Activated CD4-positive, alpha-beta T cell treated with anti-CD3 and anti-CD28 coated beads for 36 hours (primary cell): ENCODE measurements at regions of chr16 and their contacts with region 1.

Region 1: DNA sequence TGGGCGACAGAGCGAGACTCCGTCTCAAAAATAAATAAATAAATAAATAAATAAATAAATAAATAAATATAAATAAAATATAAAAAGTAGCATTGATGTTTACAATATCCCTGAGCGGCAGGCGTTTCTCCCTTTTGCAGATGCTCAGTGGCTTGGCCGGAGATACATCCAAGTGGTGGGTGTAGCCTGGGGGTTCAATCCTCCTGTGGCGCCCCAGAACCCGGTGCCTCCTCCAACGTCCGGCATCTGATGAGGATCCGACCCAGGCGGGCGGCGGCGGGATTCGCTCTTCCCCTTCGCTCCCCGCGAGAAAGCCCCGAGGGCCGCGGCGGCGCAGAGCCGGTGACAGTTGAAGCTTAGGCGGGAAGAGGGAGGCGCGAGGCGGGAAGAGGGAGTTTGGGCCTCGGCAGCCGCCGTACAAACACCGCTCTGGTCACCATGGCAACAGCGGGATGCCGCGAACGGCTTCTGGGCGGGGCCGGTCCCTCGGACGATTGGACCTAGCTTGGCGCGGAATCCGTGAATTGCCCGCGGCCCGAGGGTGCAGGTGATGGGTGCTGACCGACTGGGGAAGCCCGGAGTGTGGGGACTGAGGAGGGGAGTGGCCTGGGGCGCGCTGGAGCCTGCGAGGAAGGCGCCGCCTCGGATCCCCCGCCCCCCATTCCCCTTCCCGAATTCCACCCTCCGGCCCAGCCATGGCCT is 12.7 kb upstream of the ALDOA start:
- DNase-seq: peak; percentile 95
- ATAC-seq: peak; percentile 69
- H3K4me3 Mint-ChIP-seq: peak overlapping the region; percentile 78
- H3K27ac Mint-ChIP-seq: peak overlapping the region; percentile 72
- H3K4me1 Mint-ChIP-seq: peaks cover 25% of the 10 kb centered on the region
- H3K27me3 Mint-ChIP-seq: peaks cover 2% of the 10 kb centered on the region

Region 2: GRCh38 chr16:30032083-30032819 is 20.6 kb before region 1 on chr16:
- CTCF ChIA-PET with region 1: interaction called, 22 read pairs
- POLR2A ChIA-PET with region 1: interaction called, 4 read pairs
- intact Hi-C with region 1: no loop called
- DNase-seq: peak; percentile 80
- ATAC-seq: peak; percentile 62
- H3K4me3 Mint-ChIP-seq: peak overlapping the region; percentile 8
- H3K27ac Mint-ChIP-seq: no peak overlapping the region
- H3K4me1 Mint-ChIP-seq: peaks cover 8% of the 10 kb centered on the region
- H3K27me3 Mint-ChIP-seq: peaks cover 38% of the 10 kb centered on the region

Region 3: DNA sequence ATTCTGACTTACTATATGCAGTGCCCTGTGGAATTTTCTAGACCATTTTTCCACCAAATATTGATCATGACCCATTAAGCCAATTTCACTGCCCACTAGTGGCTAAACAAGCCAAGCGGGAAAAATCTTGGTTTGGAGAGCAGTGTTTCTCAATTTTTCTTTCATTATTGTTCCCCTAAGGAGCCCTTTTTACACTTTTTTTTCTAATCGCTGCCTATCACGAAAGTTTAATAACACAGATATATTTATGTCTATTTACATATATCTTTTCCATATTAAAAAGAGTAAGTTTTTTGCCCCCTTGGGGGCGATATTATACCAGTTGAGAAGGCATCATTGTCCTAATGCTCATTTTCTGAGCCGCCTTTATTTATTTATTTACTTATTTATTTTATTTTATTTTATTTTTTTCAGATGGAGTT is 11.0 kb before region 1 on chr16:
- CTCF ChIA-PET with region 1: interaction called, 11 read pairs
- POLR2A ChIA-PET with region 1: interaction called, 4 read pairs
- intact Hi-C with region 1: no loop called
- DNase-seq: no peak
- ATAC-seq: no peak
- H3K4me3 Mint-ChIP-seq: no peak overlapping the region
- H3K27ac Mint-ChIP-seq: no peak overlapping the region
- H3K4me1 Mint-ChIP-seq: no peaks in the 10 kb centered on the region
- H3K27me3 Mint-ChIP-seq: peaks cover 2% of the 10 kb centered on the region

Region 4: GRCh38 chr16:30122604-30123160 is 69.9 kb after region 1 on chr16:
- CTCF ChIA-PET with region 1: no interaction called
- POLR2A ChIA-PET with region 1: no interaction called
- intact Hi-C with region 1: loop called in 1 of 2 experiments (anchors 1 kb)
- DNase-seq: peak; percentile 35
- ATAC-seq: peak; percentile 37
- H3K4me3 Mint-ChIP-seq: peak overlapping the region; percentile 87
- H3K27ac Mint-ChIP-seq: peak overlapping the region; percentile 89
- H3K4me1 Mint-ChIP-seq: peaks cover 17% of the 10 kb centered on the region
- H3K27me3 Mint-ChIP-seq: no peaks in the 10 kb centered on the region